Prostate gland (tissue), 2 donors: ENCODE measurements at regions of chr1 and their contacts with region 1.

Region 1: DNA sequence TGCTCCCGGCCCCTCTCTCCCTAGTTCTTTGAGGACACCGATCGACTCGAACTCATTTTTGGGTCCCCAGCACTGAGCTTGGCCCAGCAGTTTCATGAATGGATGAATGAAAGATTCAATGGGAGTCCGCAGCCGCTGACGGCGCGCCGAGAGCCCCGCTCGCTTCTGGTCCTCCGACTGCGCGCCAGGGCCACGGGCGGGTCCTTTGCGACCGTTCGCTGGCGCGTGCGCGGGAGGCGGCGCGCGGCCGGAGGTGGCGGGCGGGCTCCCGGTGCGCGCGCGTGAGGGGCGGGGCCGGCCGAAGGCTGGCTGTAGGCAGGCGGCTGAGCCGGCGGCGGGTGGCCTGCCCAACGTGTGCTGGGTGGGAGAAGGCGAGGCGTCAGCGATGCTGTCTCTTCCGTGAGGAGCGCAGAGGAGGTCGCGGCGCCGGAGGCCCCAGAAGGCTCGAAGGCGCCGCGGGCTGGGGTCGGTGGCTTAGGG is at the start of gene MAST2:
- DNase-seq: peak; percentile 84
- H3K4me3 ChIP-seq: peak within 1 kb of the TSS; percentile 46 to 48
- H3K27ac ChIP-seq: peak within 1 kb of the TSS; percentile 42 to 50
- H3K4me1 ChIP-seq: peaks cover 5% of the 10 kb centered on the region
- H3K27me3 ChIP-seq: no peaks in the 10 kb centered on the region
- CTCF ChIP-seq: peak in 1 of 4 experiments; percentile 20
- POLR2A ChIP-seq: peak; percentile 66
- total RNA-seq, gene MAST2: 25.2 to 81.3 TPM

Region 2: DNA sequence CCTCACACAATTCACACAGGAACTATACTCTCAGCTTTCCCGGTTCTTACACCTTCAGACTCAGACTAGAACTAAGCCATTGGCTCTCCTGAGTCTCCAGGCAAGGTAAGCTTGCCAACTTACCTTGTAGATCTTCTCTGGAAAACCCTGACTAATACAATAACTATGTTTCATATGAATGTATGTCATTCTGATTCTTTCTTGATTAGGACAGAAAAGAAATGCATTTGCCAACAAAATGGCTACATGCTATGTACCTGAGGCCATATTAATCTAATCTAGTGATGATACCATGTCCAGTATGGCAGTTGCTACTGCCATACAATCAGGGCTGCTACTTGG is 587.2 kb before region 1 on chr1:
- intact Hi-C with region 1: no loop called
- DNase-seq: no peak
- H3K4me3 ChIP-seq: no peak overlapping the region
- H3K27ac ChIP-seq: no peak overlapping the region
- H3K4me1 ChIP-seq: no peaks in the 10 kb centered on the region
- H3K27me3 ChIP-seq: no peaks in the 10 kb centered on the region
- CTCF ChIP-seq: no peak
- POLR2A ChIP-seq: no peak

Region 3: DNA sequence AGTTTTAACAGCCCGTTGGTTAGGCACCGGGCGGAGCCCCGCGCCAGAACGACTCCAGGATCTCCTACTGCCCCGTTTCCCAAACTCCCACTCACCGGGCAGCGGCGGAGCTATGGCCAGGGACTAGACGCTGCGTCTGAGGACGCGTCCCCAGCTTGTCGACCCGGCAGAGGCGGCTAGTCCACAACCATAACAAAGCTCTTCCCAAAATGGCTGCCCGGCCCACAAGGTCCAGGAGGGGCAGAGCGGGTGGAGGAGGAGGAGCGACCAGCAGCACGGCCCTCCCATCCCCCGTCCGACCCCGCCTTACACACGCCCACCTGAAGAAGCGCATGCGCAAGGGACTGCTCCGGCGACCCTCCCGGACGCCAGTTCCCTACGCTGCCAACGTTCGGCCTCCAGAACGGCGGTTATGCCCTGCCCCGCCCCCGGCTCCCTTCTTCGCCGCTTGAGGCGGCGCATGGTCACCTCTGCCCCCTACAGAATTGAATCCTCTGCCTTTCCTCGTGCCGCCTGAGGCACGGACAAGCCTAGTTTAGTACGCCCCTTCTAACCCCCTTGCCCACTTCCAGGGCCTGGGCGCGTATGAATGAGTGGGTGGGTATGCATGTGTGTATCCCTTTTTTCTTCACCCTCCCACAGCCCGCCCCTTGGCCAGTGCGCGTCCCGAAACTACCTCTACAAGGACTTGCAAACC is 116.9 kb before region 1 on chr1 and contains the start of gene GPBP1L1:
- intact Hi-C with region 1: loop called (anchors 5 kb)
- DNase-seq: peak; percentile 98
- H3K4me3 ChIP-seq: peak within 1 kb of the TSS; percentile 60 to 87
- H3K27ac ChIP-seq: peak within 1 kb of the TSS; percentile 94 to 98
- H3K4me1 ChIP-seq: peaks cover 5% of the 10 kb centered on the region
- H3K27me3 ChIP-seq: no peaks in the 10 kb centered on the region
- CTCF ChIP-seq: peak in 1 of 4 experiments; percentile 29
- POLR2A ChIP-seq: peak; percentile 86
- total RNA-seq, gene GPBP1L1: 120 to 153 TPM

Region 4: DNA sequence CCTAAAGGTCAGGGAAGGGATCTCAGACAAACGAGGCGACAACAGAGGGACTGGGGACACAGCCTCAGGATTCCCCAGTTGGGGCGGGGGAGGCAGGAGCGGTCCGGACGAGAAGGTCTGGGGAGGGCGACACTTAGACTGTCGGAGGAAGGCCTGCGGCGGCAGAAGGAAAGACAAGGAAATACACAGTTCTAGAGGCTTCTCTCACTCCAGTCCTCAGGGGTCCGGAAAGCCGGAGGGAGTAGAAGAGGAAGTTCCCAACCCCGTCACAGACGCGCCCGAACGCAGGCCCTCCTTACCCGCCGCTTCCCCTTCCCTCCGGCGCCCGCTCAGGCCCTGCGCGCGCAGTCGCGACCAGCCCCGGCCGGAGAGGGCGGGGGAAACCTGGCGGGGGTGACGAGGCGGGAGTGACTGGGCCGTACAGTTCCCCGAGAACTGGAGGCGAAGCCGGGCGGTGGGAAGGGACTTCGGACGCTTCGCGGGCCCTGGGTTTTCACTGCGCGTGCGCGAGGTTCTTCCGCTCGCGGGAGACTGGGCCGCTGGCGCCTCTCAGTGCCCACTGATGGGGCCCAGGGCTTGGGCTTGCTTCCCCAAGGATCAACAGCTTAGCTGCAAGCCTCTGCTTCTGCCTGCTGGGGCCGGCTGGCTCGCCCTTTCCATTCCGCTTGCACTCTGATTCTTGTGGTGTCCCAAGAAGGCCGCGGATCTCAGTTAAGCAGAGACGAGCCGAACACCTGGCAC is 52.9 kb before region 1 on chr1 and contains the start of gene IPP:
- intact Hi-C with region 1: loop called (anchors 10 kb)
- DNase-seq: peak; percentile 96
- H3K4me3 ChIP-seq: peak within 1 kb of the TSS; percentile 55 to 56
- H3K27ac ChIP-seq: peak within 1 kb of the TSS; percentile 93
- H3K4me1 ChIP-seq: no peaks in the 10 kb centered on the region
- H3K27me3 ChIP-seq: no peaks in the 10 kb centered on the region
- CTCF ChIP-seq: peak in 3 of 4 experiments; percentile 47 to 51 (median 49)
- POLR2A ChIP-seq: peak; percentile 93
- total RNA-seq, gene IPP: 14.8 to 16.1 TPM

Region 5: GRCh38 chr1:45884700-45885099 is 81.4 kb after region 1 on chr1:
- intact Hi-C with region 1: loop called (anchors 5 kb)
- DNase-seq: peak; percentile 9
- H3K4me3 ChIP-seq: no peak overlapping the region
- H3K27ac ChIP-seq: no peak overlapping the region
- H3K4me1 ChIP-seq: no peaks in the 10 kb centered on the region
- H3K27me3 ChIP-seq: no peaks in the 10 kb centered on the region
- CTCF ChIP-seq: no peak
- POLR2A ChIP-seq: no peak